A549 (cell line): ENCODE measurements at regions of chr9 and their contacts with region 1.

Region 1: GRCh38 chr9:98315551-98316060 is 60.2 kb upstream of the TBC1D2 start:
- DNase-seq: peak; percentile 80 to 95
- ATAC-seq: peak; percentile 92 to 99
- H3K4me3 ChIP-seq: no peak overlapping the region
- H3K27ac ChIP-seq: no peak overlapping the region
- H3K4me1 ChIP-seq: 0 out of 3 replicates have a peak, but pooled peaks cover 2% of the 10 kb centered on the region
- CTCF ChIP-seq: peak; percentile 92
- EP300 ChIP-seq: no peak
- POLR2A ChIP-seq: no peak
- RAD21 ChIP-seq: peak; percentile 96

Region 2: DNA sequence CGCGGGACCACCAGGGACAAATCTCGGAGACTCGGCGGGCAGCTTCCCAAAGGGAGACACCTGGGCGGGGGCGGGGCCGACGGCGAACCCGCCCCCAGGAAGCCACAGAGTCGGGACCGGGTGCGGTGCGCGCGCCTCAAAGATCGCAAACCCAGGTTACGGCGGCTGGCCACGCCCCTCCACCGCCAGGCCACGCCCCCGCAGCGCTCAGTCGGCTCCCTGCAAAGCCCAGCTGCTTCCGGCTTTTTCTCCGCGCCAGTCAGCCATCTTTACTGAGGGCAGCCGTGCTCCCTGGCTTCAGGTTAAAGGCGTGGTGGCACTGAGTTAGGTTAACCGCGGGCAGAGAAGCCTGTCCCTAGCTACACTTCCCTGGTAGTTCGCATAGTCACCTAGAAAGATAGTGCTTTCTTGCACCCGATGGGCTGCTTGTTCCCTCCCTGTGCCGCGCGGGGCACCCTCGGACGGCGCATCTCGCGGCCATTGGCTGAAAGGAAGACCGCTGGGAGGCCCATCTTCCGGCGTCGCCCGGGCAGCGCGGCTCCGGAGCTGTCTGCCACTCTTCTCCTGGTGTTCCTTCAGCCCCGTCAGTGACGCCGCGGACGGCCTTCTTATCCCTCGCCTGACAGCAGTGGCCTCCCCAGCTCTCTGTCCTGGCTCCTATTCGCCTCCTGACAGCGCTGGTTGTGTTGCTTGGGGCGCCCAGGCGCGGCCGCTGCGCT is 59.9 kb before region 1 on chr9 and contains the start of gene TBC1D2:
- CTCF ChIA-PET with region 1: no interaction called
- POLR2A ChIA-PET with region 1: no interaction called
- DNase-seq: peak; percentile 92 to 94
- ATAC-seq: peak; percentile 85 to 94
- H3K4me3 ChIP-seq: peak within 1 kb of the TSS; percentile 79
- H3K27ac ChIP-seq: peak within 1 kb of the TSS; percentile 86 to 90
- H3K4me1 ChIP-seq: peaks cover 45% of the 10 kb centered on the region
- CTCF ChIP-seq: no peak
- EP300 ChIP-seq: no peak
- POLR2A ChIP-seq: peak; percentile 83
- RAD21 ChIP-seq: no peak
- polyA plus RNA-seq, gene TBC1D2: 3.3 and 4.1 TPM in 2 replicates

Region 3: DNA sequence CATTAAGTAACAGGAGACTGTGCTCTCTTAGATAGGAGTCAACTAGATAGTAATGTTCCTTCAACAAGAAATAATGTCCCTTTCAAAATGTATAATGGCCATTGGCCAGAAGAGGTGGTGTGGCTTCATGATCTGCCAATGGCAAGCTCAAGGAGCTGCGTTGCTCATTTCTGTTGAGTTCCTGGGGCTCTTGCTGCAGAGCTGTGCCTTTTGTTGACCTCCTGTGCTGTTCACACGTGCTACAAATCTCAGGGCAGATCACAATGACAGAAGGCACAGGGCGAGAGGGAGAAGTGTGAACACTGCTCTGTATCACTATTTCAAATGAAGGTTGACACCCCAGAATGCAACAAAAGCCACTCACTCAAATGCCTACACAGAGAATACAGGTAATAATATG is 44.1 kb before region 1 on chr9:
- CTCF ChIA-PET with region 1: no interaction called
- POLR2A ChIA-PET with region 1: no interaction called
- DNase-seq: no peak
- ATAC-seq: no peak; a peak in 1 of 6 replicates
- H3K4me3 ChIP-seq: no peak overlapping the region
- H3K27ac ChIP-seq: no peak overlapping the region
- H3K4me1 ChIP-seq: no peaks in the 10 kb centered on the region
- CTCF ChIP-seq: no peak
- EP300 ChIP-seq: no peak
- POLR2A ChIP-seq: no peak
- RAD21 ChIP-seq: no peak

Region 4: GRCh38 chr9:98326459-98327248 is 11.0 kb after region 1 on chr9:
- CTCF ChIA-PET with region 1: interaction called, 56 read pairs
- POLR2A ChIA-PET with region 1: no interaction called
- DNase-seq: no peak
- ATAC-seq: no peak
- H3K4me3 ChIP-seq: no peak overlapping the region
- H3K27ac ChIP-seq: no peak overlapping the region
- H3K4me1 ChIP-seq: no peaks in the 10 kb centered on the region
- CTCF ChIP-seq: no peak
- EP300 ChIP-seq: no peak
- POLR2A ChIP-seq: no peak
- RAD21 ChIP-seq: no peak

Region 5: DNA sequence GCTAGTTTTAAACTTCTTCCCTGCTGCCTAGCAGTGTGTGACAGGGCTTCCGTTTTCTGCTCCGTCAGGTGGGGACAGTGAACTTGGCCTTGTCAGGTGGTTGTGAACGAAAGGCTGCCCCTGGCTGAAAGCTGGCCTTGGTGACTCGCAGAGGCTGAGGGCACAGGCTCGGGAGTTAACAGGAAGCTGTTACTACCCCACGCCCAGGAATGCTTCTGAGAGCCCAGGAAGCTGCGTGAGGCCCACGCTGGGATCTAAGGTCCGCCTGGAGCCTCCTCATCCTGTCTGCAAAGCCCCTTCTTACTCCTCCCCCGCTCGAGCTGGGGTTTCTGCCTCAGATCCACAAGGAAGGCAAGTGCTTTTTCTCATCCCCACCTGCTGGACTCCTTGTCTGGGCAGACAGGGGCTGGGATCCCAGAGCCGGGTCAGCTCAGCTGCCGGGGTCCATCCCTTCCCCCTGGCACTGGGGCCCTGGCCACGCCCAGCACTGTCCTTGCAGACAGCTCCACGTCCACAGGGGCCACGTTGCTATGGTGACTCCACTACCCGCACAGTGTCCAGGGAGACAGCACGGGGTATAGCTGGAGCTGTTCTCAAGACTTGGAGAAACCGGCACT is 64.6 kb after region 1 on chr9:
- CTCF ChIA-PET with region 1: interaction called, 11 read pairs
- POLR2A ChIA-PET with region 1: no interaction called
- DNase-seq: peak in 1 of 2 experiments; percentile 52
- ATAC-seq: peak; percentile 45 to 66; a peak in 3 of 6 replicates
- H3K4me3 ChIP-seq: no peak overlapping the region
- H3K27ac ChIP-seq: peak overlapping the region in 1 of 2 experiments; percentile 64; a peak in 4 of 6 replicates
- H3K4me1 ChIP-seq: peaks cover 11% of the 10 kb centered on the region
- CTCF ChIP-seq: no peak
- EP300 ChIP-seq: no peak
- POLR2A ChIP-seq: no peak
- RAD21 ChIP-seq: no peak

Region 6: DNA sequence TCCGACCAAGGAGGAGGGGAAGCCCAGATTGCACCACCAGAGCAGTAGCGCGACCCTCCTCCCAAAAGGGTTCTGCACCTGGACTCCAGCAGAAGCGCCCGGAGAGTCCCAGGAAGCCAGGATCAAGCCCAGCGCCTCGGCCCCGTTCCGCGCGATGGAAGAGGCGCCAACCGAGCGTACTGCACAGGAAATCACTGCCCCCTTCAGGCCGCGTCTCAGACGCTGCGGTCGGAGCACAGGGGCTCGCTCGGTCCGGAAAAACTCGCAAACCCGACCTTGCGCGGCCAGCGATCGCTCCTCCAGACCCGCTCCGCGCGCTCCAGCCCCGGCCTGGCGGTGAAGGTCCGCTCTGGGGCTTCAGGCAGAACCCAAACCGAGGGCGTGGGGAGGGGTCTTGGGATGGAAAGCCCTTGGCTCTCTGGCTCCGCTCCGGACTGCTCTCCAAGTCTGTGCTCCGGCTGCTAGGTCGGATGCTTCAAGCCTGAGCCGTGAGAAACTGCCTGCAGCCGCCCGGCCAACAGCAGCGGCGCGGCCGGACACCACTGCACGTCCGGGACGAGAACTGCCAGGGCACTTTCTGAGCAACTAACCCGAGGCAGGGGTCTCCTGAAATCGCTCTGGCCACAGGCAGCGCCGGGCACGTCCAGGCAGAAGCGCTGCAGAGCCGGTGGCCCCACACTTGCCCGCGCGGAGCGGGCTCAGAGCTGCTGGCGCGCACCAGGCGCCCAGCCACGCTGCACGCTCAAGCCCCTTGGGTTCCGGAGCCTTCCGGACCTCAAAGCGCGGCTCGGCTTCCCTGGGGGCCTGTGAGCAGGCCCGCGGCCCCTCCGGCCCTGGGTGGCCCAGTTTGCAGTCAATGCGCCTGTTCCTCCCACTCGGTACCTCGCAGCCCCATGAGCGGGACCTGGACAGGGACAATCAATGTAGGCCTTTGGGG is 391.8 kb after region 1 on chr9:
- CTCF ChIA-PET with region 1: interaction called, 59 read pairs
- POLR2A ChIA-PET with region 1: no interaction called
- DNase-seq: peak; percentile 69 to 78
- ATAC-seq: peak; percentile 80 to 95
- H3K4me3 ChIP-seq: peak overlapping the region; percentile 52
- H3K27ac ChIP-seq: no peak overlapping the region
- H3K4me1 ChIP-seq: peaks cover 15% of the 10 kb centered on the region
- CTCF ChIP-seq: peak; percentile 54
- EP300 ChIP-seq: no peak
- POLR2A ChIP-seq: no peak
- RAD21 ChIP-seq: peak; percentile 69 to 73

Region 7: GRCh38 chr9:98781588-98782383 is 466.2 kb after region 1 on chr9:
- CTCF ChIA-PET with region 1: interaction called, 164 read pairs
- POLR2A ChIA-PET with region 1: no interaction called
- DNase-seq: peak; percentile 67 to 77
- ATAC-seq: peak; percentile 56 to 80; a peak in 3 of 6 replicates
- H3K4me3 ChIP-seq: no peak overlapping the region
- H3K27ac ChIP-seq: peak overlapping the region; percentile 49 to 55; a peak in 4 of 6 replicates
- H3K4me1 ChIP-seq: peaks cover 22% of the 10 kb centered on the region
- CTCF ChIP-seq: no peak
- EP300 ChIP-seq: no peak
- POLR2A ChIP-seq: no peak
- RAD21 ChIP-seq: no peak